Activated CD4-positive, alpha-beta T cell treated with anti-CD3 and anti-CD28 coated beads, Interleukin-2, amount 10 ng/mL, durations not matched to agents 24 days and 14 days (primary cell): ENCODE measurements at regions of chr1 and their contacts with region 1.

Region 1: GRCh38 chr1:26787706-26788514 is at the start of gene PIGV:
- DNase-seq: peak; percentile 97
- H3K4me3 Mint-ChIP-seq: peak within 1 kb of the TSS; percentile 100
- H3K27ac Mint-ChIP-seq: peak within 1 kb of the TSS; percentile 100
- H3K4me1 Mint-ChIP-seq: peaks cover 67% of the 10 kb centered on the region
- H3K27me3 Mint-ChIP-seq: no peaks in the 10 kb centered on the region
- total RNA-seq, gene PIGV: 15.2 and 16.0 TPM in 2 replicates

Region 2: GRCh38 chr1:26203642-26204318 is 584.1 kb before region 1 on chr1:
- intact Hi-C with region 1: no loop called
- DNase-seq: no peak
- H3K4me3 Mint-ChIP-seq: no peak overlapping the region
- H3K27ac Mint-ChIP-seq: no peak overlapping the region
- H3K4me1 Mint-ChIP-seq: peaks cover 30% of the 10 kb centered on the region
- H3K27me3 Mint-ChIP-seq: no peaks in the 10 kb centered on the region

Region 3: DNA sequence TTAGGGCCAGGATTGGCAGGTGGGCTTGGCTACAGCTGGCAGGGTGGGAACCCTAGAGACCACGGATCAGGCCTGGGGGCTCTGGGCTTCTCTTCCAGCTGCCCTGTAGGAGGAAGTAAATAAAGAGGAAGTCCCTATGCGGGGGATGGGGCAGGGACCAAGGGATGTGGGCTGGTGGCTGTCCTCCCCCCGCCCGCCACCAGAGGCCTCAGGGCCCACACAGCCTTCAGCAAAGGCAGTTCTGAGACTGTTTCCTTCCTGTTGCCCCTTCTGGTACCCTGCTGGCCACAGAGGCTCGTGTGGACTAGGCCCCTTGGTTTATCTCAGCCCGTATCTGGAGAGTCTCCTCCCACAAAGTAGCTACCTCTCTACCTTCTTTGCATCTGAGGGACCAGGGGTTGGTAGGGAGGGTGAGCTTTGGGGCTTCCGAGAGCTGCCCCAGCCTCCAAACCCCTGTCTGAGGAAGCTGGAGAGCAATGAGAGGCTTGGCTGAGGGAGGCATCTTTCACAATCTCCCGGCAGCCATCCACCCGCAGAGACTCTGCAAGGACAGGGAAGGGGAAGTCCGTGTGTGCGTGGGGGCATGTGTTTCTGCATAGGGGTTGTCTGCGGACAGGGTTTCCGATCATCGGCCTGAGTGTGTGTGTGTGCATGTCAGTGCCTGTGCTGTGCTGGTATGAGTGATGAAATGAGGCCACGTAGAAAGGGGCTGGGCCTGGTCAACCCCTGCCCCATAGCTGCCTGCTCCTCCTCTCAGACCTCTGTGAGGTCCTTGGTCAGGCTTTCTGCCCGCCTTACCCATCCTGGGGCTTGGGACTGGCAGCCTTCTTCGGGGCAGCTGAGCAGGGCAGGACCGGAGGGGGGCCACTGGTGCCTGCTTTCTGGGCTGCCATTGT is 245.8 kb before region 1 on chr1:
- intact Hi-C with region 1: loop called (anchors 2 kb)
- DNase-seq: peak; percentile 93
- H3K4me3 Mint-ChIP-seq: peak overlapping the region; percentile 83
- H3K27ac Mint-ChIP-seq: peak overlapping the region; percentile 91
- H3K4me1 Mint-ChIP-seq: peaks cover 78% of the 10 kb centered on the region
- H3K27me3 Mint-ChIP-seq: no peaks in the 10 kb centered on the region

Region 4: DNA sequence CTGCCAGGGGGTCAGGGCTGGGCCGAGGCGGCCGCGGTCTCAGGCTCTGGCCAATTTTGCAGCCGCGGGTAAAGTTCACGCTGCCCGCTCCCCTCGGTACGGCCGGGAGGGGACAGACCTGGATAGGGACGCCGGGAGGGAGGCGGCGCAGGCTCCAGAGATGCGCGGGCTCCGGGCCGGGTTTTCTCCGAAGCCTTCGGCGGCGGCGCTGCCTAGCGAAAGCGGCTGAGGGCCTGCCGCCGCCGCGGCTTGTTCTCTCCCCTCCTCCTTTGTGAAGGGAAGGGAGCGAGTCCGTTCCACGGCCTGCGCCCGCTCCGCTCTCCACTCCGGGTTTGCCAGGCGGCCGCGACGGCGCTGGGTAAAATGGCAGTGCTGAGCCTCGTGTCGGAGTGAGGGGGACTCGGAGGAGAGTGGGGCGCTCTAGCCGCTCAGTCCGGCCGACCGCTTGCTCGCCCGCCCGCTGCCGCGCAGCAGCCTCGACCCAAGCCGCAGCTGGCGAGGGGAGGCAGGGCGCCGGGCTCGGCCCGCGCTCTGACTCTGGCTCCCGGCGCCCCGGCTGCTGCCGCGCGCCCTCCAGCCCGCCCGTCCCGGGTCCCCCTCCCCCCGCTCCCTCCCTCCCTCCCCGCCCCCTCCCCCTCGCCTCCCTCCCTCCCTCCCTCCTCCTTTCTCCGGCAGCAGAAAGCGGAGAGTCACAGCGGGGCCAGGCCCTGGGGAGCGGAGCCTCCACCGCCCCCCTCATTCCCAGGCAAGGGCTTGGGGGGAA is 92.4 kb before region 1 on chr1 and contains the start of gene ARID1A:
- intact Hi-C with region 1: loop called (anchors 1 kb)
- DNase-seq: peak; percentile 99
- H3K4me3 Mint-ChIP-seq: peak within 1 kb of the TSS; percentile 94
- H3K27ac Mint-ChIP-seq: peak within 1 kb of the TSS; percentile 99
- H3K4me1 Mint-ChIP-seq: peaks cover 35% of the 10 kb centered on the region
- H3K27me3 Mint-ChIP-seq: no peaks in the 10 kb centered on the region
- total RNA-seq, gene ARID1A: 111 and 117 TPM in 2 replicates

Region 5: GRCh38 chr1:26754086-26754874 is 33.6 kb before region 1 on chr1:
- intact Hi-C with region 1: no loop called
- DNase-seq: no peak
- H3K4me3 Mint-ChIP-seq: no peak overlapping the region
- H3K27ac Mint-ChIP-seq: no peak overlapping the region
- H3K4me1 Mint-ChIP-seq: peaks cover 38% of the 10 kb centered on the region
- H3K27me3 Mint-ChIP-seq: no peaks in the 10 kb centered on the region

Region 6: GRCh38 chr1:26771643-26772321 is 16.1 kb before region 1 on chr1:
- intact Hi-C with region 1: loop called (anchors 2 kb)
- DNase-seq: no peak
- H3K4me3 Mint-ChIP-seq: no peak overlapping the region
- H3K27ac Mint-ChIP-seq: peak overlapping the region; percentile 74
- H3K4me1 Mint-ChIP-seq: peaks cover 25% of the 10 kb centered on the region
- H3K27me3 Mint-ChIP-seq: no peaks in the 10 kb centered on the region

Region 7: DNA sequence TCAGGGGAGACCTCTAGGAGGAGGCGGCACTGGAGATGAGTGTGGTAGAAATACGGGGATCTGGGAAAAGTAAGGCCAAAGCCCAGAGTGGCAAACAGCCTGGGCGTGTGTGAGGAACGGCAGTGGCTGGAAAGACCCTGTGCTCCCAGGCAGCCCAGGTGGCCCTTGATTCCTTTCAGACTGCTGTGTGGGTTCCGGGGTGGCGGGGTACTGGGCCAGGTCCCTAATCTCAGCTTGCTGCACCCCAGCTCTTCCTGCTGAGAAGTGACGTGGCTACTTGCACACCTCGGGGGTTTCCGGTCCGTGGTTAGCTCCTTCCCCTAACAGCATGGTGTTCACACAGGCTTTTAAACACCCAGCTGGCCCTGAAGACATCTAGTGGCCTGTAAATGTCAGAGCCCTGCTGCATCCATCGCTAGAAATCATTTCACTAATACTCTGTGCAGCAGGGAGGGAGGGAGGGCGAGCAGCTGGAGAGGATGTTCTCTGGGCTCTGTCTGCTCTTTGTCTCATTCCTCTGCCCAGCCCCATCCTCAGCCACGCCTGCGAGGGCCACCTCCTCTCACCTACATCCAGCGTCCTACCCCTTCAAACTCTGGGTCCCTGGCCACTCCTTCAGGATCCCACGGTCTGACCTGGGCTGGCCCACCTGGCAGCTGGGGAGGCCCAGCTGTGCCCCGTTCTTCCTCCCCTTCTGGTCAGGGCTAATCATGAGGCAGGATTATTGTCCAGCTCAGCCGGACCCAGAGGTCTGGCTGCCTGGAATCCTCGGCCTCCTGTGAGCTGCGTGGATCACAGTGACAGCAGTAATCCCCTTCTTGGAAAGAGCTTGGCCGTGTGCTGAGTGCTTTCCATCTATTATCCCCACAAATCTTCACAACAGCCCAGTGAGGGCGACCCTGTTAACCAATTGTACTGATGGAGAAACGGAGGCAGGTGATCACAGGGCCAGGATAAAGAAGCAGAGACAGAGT is 45.8 kb after region 1 on chr1:
- intact Hi-C with region 1: loop called (anchors 2 kb)
- DNase-seq: peak; percentile 97
- H3K4me3 Mint-ChIP-seq: peak overlapping the region; percentile 70
- H3K27ac Mint-ChIP-seq: peak overlapping the region; percentile 92
- H3K4me1 Mint-ChIP-seq: peaks cover 66% of the 10 kb centered on the region
- H3K27me3 Mint-ChIP-seq: no peaks in the 10 kb centered on the region